Mucosa of descending colon (tissue), 3 donors: ENCODE measurements at regions of chr2 and their contacts with region 1.

Region 1: GRCh38 chr2:170973492-170974303 is 44.6 kb downstream of the GORASP2 start:
- DNase-seq: peak; percentile 89 to 93 (median 93)
- ATAC-seq: peak; percentile 98
- H3K4me3 ChIP-seq: peak overlapping the region; percentile 42
- H3K4me1 ChIP-seq: peaks cover 11% of the 10 kb centered on the region
- CTCF ChIP-seq: peak; percentile 95

Region 2: GRCh38 chr2:171102802-171103201 is 129.1 kb after region 1 on chr2:
- intact Hi-C with region 1: no loop called
- DNase-seq: no peak
- ATAC-seq: no peak
- H3K4me3 ChIP-seq: no peak overlapping the region
- H3K4me1 ChIP-seq: no peaks in the 10 kb centered on the region
- CTCF ChIP-seq: no peak

Region 3: DNA sequence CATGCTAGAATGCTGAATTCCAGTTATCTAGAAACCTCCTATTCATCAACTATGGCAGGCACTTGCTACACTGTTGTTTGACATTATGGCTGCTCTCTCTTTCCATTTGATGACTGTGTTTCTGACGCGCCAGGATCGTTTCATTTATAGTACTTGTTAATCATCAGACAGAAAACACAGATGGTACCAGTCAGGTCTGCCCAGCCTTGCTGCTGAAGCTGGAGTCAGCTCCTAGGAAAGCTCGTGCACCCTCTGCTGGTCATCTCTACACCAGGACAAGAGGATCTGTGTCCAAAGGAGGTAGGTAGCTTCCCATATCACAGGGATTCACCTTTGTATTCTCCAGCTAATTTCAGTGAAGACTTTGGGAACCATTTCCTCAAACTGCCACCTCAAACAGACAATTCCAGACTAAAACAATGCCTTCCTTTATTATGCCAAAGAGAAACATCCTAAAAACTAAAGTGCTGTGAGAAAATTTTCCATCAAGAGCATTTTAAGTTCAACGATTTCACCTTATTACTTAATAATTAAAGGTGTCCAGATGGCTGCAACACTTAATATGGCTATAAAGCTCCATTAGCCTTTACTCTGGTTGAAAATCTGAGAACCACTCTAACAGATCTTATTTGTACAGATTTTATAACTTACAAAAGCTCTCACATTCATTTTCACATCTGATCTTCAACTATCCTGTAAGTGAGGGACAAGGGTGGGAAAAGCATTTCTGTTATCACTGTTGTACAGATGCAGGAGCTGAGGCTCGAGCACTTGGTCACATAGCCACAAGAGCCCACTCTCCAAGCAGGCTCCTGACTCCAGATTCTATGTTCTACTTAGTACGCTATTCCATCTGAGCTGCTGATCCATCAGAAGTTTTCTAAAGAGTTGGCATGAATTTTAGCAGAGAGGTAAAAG is 442.6 kb after region 1 on chr2:
- intact Hi-C with region 1: loop called in 1 of 2 experiments (anchors 10 kb)
- DNase-seq: peak; percentile 80 to 98 (median 84)
- ATAC-seq: peak; percentile 100
- H3K4me3 ChIP-seq: no peak overlapping the region
- H3K4me1 ChIP-seq: peaks cover 2% of the 10 kb centered on the region
- CTCF ChIP-seq: peak; percentile 81